PC-9 (cell line): ENCODE measurements at regions of chr14 and their contacts with region 1.

Region 1: DNA sequence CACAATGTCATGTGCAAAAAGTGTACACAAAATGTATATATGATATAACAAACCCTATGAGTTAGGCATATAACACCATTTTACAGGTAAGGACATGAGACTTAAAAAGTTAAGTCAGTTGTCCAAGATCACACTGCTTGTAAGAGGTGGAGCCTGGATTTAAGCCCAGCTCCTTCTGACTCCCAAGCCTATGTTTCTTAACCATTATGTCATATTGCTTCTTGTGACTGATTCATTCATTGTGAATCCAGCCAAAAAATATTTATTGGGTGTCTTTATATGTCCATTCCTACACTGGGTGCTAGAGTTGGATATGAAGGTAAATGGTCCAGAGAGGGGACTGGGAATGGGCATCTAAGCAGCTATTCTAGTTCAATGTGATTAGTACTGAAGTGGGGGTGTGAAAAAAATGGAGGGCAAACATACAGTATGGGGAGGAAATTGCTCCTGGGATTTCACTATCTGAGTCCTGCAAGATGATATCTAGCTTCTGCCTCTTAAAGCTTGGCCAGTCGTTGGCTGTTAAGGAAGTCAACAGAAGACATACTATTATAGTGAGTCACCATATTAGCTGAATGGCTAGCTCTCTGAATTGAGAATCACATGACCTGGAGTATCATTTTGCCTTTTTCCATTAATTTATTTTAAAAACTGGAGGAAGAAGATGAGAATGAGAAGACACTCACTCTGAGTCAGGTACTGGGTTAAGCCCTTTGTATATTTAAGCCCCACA is 28.8 kb downstream of the PAX9 start:
- DNase-seq: peak; percentile 16 to 61
- H3K4me3 ChIP-seq: no peak overlapping the region
- H3K27ac ChIP-seq: no peak overlapping the region
- H3K4me1 ChIP-seq: no peaks in the 10 kb centered on the region; the same call in 1 of the 2 replicates
- H3K27me3 ChIP-seq: no peaks in the 10 kb centered on the region
- CTCF ChIP-seq: no peak

Region 2: DNA sequence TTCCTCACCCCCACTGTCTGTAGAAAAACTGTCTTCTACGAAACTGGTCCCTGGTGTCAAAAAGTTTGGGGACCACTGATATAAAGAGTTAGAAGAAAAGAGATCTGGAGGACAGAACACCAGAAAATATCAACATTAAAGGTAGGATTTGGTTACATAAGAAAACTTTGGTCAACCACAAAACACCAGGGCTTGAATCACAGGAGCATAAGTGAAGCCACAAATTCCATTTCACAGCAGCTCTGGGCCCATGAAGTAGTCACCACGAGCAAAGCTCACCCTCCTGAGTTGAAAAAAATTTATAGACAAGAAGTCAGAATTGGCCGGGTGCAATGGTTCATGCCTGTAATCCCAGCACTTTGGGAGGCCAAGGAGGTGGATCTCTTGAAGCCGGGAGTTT is 900.8 kb before region 1 on chr14:
- CTCF ChIA-PET with region 1: no interaction called
- POLR2A ChIA-PET with region 1: interaction called, 18 read pairs
- intact Hi-C with region 1: no loop called
- DNase-seq: no peak
- H3K4me3 ChIP-seq: no peak overlapping the region
- H3K27ac ChIP-seq: no peak overlapping the region
- H3K4me1 ChIP-seq: no peaks in the 10 kb centered on the region
- H3K27me3 ChIP-seq: no peaks in the 10 kb centered on the region
- CTCF ChIP-seq: no peak

Region 3: GRCh38 chr14:36773136-36773540 is 82.7 kb after region 1 on chr14:
- CTCF ChIA-PET with region 1: no interaction called
- POLR2A ChIA-PET with region 1: no interaction called
- intact Hi-C with region 1: no loop called
- DNase-seq: peak; percentile 18 to 57
- H3K4me3 ChIP-seq: no peak overlapping the region
- H3K27ac ChIP-seq: no peak overlapping the region
- H3K4me1 ChIP-seq: peaks cover 47% of the 10 kb centered on the region
- H3K27me3 ChIP-seq: no peaks in the 10 kb centered on the region
- CTCF ChIP-seq: peak; percentile 28; the same call in 1 of the 2 replicates

Region 4: GRCh38 chr14:36863271-36863670 is 172.8 kb after region 1 on chr14:
- CTCF ChIA-PET with region 1: no interaction called
- POLR2A ChIA-PET with region 1: no interaction called
- intact Hi-C with region 1: no loop called
- DNase-seq: no peak
- H3K4me3 ChIP-seq: no peak overlapping the region
- H3K27ac ChIP-seq: no peak overlapping the region
- H3K4me1 ChIP-seq: no peaks in the 10 kb centered on the region
- H3K27me3 ChIP-seq: no peaks in the 10 kb centered on the region
- CTCF ChIP-seq: no peak

Region 5: GRCh38 chr14:36996133-36996856 is 305.8 kb after region 1 on chr14:
- CTCF ChIA-PET with region 1: no interaction called
- POLR2A ChIA-PET with region 1: no interaction called
- intact Hi-C with region 1: no loop called
- DNase-seq: peak; percentile 56 to 65
- H3K4me3 ChIP-seq: no peak overlapping the region
- H3K27ac ChIP-seq: peak overlapping the region; percentile 63
- H3K4me1 ChIP-seq: peaks cover 19% of the 10 kb centered on the region
- H3K27me3 ChIP-seq: no peaks in the 10 kb centered on the region
- CTCF ChIP-seq: no peak